ENCODE measurements at regions of chr1 and their contacts with region 1.

Region 1: DNA sequence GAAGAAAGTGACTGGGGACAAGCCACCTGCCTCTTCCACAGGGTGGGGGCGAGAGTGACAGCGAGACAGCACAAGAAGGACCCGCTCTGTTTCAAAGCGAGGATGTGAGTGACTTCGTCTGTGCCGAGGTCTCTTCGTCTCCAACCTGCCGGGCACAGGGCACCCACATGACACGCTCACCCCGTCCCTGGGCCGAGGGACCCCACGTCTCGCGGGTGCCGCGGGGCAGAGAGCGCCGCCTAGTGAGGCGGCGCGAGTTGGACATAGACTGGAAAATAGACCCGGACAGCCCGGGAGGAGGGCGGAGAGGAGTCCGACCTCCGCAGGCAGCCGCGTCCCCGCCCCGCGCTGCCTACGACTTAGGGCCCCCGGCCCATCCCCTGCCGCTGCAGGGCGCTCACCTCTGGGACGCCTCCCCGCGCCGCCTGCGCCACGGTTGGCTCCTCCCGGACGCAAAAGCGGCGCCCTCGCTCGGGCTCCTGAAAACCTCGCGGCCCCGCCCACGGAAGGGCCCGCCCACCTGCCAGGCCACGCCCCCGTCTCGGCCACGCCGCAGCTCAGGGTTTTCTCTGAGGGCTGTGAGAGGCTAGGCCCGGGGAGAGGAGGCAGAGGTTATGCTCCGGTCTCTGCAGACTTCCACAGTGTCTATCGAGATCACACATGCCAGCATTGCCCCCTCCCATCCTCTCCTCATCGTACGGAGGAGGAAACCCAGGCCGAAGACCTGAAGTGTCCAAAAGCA is at the start of gene TLR5:
- DNase-seq: peak; percentile 91
- H3K4me3 ChIP-seq: peak within 1 kb of the TSS; percentile 59 to 73 (median 66)
- H3K27ac ChIP-seq: peak within 1 kb of the TSS; percentile 67 to 73 (median 70)
- H3K4me1 ChIP-seq: peaks cover 0 to 25% (median 16%) of the 10 kb centered on the region in 4 donors
- H3K27me3 ChIP-seq: no peaks in the 10 kb centered on the region
- CTCF ChIP-seq: peak in 3 of 4 experiments; percentile 56 to 73 (median 60)
- EP300 ChIP-seq: no peak
- POLR2A ChIP-seq: no peak
- total RNA-seq, gene TLR5: 3.6 to 10.2 (median 4.3) TPM

Region 2: DNA sequence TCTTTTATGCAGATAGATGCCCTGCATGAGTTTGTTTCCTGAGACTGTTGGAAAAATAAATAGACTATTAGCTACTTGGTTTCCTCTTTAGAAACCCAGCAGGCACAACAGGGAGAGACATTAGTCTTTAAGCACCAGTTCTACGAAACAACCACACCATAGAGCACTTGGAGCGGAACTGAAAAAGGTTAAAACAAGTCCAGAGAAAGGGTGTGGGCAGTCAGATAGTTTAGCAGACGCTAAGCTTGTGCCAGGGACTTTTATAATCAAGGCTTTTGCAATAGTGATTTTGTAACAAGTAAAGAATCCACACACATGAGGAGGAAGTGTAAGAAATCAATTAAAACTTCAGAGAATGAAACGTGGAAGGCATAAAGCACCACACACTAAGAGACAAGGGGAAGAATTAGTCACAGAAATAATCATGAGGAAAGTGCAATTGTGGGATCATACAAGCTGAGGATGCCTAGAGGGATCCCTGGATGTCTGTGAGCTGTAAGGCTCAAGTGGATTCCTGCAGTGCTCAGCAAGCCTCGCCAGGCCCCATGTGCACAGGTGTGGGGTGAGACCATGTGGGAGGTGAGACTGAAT is 37.9 kb after region 1 on chr1:
- intact Hi-C with region 1: no loop called
- DNase-seq: no peak
- H3K4me3 ChIP-seq: no peak overlapping the region
- H3K27ac ChIP-seq: peak overlapping the region; percentile 17 to 59 (median 39)
- H3K4me1 ChIP-seq: no peaks in the 10 kb centered on the region
- H3K27me3 ChIP-seq: no peaks in the 10 kb centered on the region
- CTCF ChIP-seq: no peak
- EP300 ChIP-seq: no peak
- POLR2A ChIP-seq: no peak

Region 3: GRCh38 chr1:223207293-223208066 is 64.5 kb after region 1 on chr1:
- intact Hi-C with region 1: no loop called
- DNase-seq: no peak
- H3K4me3 ChIP-seq: no peak overlapping the region
- H3K27ac ChIP-seq: no peak overlapping the region
- H3K4me1 ChIP-seq: no peaks in the 10 kb centered on the region
- H3K27me3 ChIP-seq: no peaks in the 10 kb centered on the region
- CTCF ChIP-seq: no peak
- EP300 ChIP-seq: no peak
- POLR2A ChIP-seq: no peak

Region 4: DNA sequence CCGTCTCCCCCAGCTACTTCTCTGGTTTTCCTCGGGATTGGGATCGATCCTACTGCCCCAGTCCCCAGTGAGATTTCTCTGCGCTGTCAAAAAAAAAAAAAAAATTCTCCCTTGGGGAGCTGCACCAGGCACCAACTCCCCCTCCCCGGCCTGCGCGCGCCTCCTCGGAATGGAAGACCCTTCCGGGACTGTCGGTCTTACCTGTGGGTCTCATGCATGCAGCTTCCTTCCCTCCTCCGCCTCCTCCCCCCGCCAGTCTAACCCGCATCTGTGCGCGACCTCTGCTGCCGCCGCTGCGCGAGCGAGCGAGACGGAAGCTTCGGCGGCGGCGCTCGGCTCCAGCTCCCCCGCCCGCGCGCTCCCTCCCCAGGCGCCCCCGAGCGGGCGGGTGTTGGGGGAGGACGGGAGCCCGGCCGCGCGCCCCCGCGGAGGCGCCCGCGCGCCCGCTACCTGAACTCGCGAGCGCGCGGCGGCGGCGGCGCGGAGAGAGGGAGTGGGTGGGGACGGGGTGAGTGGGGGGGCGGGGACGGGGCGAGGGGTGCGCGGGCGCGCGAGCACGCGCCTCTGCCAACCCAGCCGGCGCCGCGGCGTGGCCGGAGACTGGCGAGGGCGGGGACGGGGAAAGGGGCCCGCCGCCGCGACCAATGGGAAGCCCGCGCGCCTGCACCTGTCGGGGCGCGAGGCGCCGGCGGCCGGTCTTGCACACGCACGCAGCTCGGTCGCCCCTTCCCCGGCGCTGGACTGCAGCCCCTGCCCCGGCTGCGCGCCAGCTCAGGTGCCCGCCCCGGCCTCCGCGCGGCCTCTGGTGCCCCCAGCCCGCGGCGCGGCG is 221.1 kb after region 1 on chr1 and contains the start of gene SUSD4:
- intact Hi-C with region 1: loop called (anchors 5 kb)
- DNase-seq: no peak
- H3K4me3 ChIP-seq: peak within 1 kb of the TSS; percentile 35 to 58 (median 58)
- H3K27ac ChIP-seq: peak within 1 kb of the TSS in 2 of 4 donors; percentile 44 to 46
- H3K4me1 ChIP-seq: peaks cover 0 to 25% (median 22%) of the 10 kb centered on the region in 4 donors
- H3K27me3 ChIP-seq: peaks cover 0 to 13% (median 0%) of the 10 kb centered on the region in 3 donors
- CTCF ChIP-seq: no peak
- EP300 ChIP-seq: no peak
- POLR2A ChIP-seq: no peak
- total RNA-seq, gene SUSD4: 0.81 to 3.9 (median 1.8) TPM